ENCODE measurements at regions of chr7 and their contacts with region 1.

Region 1: DNA sequence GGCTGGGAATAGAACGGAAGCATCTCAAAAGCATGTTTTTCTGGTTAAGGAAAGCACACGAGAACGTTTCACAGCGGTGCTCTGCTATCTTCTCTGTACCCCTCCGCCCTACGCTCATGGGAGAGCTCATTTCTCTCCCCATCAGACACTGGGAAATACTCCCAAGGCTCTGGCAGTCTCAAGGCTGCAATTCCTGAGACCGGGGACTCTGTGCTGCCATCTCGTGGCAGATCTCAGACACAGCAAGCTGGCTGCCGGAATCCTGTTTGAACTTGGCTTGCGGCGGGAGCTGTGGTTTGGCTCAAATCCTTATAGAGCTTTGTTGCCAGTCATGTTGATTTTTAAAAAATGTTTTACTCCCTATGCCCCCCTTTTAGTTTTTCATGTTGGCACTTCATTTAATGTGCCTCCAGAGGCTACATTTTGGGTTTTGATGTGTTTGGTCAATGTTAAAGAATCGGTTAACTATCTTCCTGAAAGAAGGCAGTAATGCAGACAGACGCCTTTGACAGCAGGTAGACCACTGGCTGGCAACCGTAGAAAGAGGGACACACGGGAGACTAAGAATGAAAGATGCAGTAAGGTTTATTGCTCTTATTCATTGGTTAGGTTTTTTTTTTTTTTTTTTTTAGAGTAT is 27.6 kb downstream of the BMPER start:
- DNase-seq: peak; percentile 61
- H3K4me3 ChIP-seq: no peak overlapping the region
- H3K27ac ChIP-seq: no peak overlapping the region
- H3K27me3 ChIP-seq: no peaks in the 10 kb centered on the region
- CTCF ChIP-seq: peak; percentile 99

Region 2: DNA sequence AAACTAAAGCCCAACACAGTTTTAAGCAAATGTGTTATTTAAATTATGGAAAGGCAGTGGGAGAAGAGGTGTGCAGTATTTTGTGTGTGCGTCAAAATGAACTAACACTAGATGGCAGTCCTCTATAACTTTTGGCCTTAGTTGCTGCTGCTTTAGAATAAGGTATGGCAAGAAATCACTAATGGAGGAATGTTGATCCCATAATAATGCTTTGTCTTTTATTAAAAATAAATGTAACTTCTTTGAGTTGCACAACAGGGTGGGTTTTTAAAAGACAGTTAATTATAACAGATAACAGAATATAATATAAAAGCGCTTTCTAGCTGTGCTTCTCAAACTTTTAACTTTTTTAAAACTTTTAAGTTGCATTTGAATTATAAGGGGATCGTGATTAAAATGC is 747.2 kb before region 1 on chr7:
- CTCF ChIA-PET with region 1: interaction called, 17 read pairs
- POLR2A ChIA-PET with region 1: no interaction called
- DNase-seq: peak; percentile 10
- H3K4me3 ChIP-seq: no peak overlapping the region
- H3K27ac ChIP-seq: no peak overlapping the region
- H3K27me3 ChIP-seq: no peaks in the 10 kb centered on the region
- CTCF ChIP-seq: peak; percentile 70

Region 3: GRCh38 chr7:33423646-33424020 is 509.3 kb before region 1 on chr7:
- CTCF ChIA-PET with region 1: interaction called, 29 read pairs
- POLR2A ChIA-PET with region 1: no interaction called
- DNase-seq: no peak
- H3K4me3 ChIP-seq: no peak overlapping the region
- H3K27ac ChIP-seq: no peak overlapping the region
- H3K27me3 ChIP-seq: no peaks in the 10 kb centered on the region
- CTCF ChIP-seq: peak; percentile 27

Region 4: GRCh38 chr7:33757562-33758165 is 175.3 kb before region 1 on chr7:
- CTCF ChIA-PET with region 1: interaction called, 38 read pairs
- POLR2A ChIA-PET with region 1: no interaction called
- DNase-seq: no peak
- H3K4me3 ChIP-seq: no peak overlapping the region
- H3K27ac ChIP-seq: no peak overlapping the region
- H3K27me3 ChIP-seq: no peaks in the 10 kb centered on the region
- CTCF ChIP-seq: peak; percentile 55

Region 5: DNA sequence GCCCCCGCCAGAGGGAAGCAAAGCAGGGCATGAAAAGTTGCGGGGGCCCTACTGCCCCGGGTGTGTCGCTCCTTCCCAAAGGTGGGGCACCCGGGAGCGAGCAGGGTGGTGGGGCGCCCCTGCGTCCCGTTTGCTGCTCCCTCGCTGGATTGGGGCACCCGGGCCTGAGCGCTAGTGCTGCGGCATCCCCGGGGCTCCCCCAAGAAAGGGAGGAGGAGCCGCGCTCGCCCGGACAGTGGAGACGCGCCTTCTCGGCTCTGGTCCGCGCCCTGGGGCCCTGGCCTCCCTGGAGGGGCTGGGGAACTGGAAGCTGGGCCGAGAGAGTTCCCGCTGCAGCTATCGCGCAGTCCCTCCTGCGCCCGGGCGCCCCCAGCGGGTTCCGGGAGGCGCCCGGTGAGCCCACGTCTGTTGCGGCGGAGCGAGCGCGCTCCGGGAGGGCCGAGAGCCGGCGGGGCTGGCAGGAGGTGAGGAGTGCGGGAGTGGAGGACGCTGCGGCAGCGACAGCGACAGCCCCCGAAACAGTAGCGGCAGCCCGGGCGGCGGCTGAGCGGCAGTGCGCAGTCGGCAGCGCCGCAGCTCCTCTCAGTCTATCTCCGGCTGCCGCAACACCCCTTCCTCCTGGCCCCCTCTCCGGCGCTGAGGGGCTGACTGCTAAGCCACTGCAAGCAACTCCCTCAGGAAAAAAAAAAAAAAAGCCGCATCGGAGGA is 28.1 kb before region 1 on chr7:
- CTCF ChIA-PET with region 1: interaction called, 55 read pairs
- POLR2A ChIA-PET with region 1: no interaction called
- DNase-seq: no peak
- H3K4me3 ChIP-seq: peak overlapping the region; percentile 67
- H3K27ac ChIP-seq: no peak overlapping the region
- H3K27me3 ChIP-seq: no peaks in the 10 kb centered on the region
- CTCF ChIP-seq: peak; percentile 37

Region 6: DNA sequence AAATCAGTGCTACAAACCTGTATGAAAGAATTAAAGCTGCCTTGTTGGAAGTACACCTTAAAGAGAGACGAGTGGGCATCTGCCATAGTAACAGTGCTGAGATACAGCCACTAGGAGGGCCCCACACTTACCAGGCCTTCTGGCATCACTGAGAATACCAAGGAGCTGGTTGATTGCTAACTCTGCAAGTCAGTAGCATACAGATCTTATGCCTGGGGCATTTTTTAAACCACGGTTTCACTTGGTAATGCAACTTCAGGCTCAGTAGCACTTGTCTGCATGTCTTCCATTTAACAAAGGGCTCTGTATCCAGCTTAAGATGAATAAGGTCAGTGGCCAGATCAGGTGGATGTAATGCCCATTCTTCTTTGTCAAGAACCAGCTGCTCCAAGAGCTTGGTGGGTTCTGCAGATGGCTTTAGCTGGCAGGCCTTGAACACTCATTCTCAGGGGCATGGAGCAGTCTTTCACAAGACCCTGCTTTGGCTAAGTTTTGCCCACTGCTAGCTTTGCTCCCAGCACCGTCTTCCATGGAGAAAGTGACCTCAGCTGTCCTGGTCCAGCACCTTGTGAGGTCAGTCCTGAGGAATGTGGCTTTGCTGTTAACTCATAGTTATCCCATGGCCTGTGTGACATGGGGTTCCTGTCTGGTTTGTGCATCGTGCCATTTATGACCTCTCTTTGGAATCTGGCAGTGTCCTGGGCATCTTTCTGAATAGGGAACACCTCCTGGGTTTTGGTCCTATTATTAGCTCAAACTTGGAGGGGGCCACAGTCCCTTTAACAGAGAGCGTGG is 40.5 kb after region 1 on chr7:
- CTCF ChIA-PET with region 1: interaction called, 16 read pairs
- POLR2A ChIA-PET with region 1: no interaction called
- DNase-seq: no peak
- H3K4me3 ChIP-seq: no peak overlapping the region
- H3K27ac ChIP-seq: no peak overlapping the region
- H3K27me3 ChIP-seq: no peaks in the 10 kb centered on the region
- CTCF ChIP-seq: no peak

Region 7: GRCh38 chr7:34086064-34086463 is 153.1 kb after region 1 on chr7:
- CTCF ChIA-PET with region 1: interaction called, 22 read pairs
- POLR2A ChIA-PET with region 1: no interaction called
- DNase-seq: no peak
- H3K4me3 ChIP-seq: no peak overlapping the region
- H3K27ac ChIP-seq: no peak overlapping the region
- H3K27me3 ChIP-seq: no peaks in the 10 kb centered on the region
- CTCF ChIP-seq: no peak

Measured in AG04450 (cell line).